A549 (cell line): ENCODE measurements at regions of chr5 and their contacts with region 1.

Region 1: GRCh38 chr5:81165493-81166119 is 67.5 kb upstream of the CKMT2 start:
- DNase-seq: peak; percentile 69 to 71
- ATAC-seq: peak; percentile 90 to 98
- H3K4me3 ChIP-seq: no peak overlapping the region
- H3K27ac ChIP-seq: no peak overlapping the region
- H3K4me1 ChIP-seq: no peaks in the 10 kb centered on the region
- CTCF ChIP-seq: peak; percentile 74
- EP300 ChIP-seq: no peak
- POLR2A ChIP-seq: no peak
- RAD21 ChIP-seq: peak; percentile 80 to 83

Region 2: GRCh38 chr5:80686757-80687156 is 478.8 kb before region 1 on chr5:
- CTCF ChIA-PET with region 1: interaction called, 11 read pairs
- POLR2A ChIA-PET with region 1: no interaction called
- DNase-seq: peak in 1 of 2 experiments; percentile 9
- ATAC-seq: no peak
- H3K4me3 ChIP-seq: no peak overlapping the region
- H3K27ac ChIP-seq: no peak overlapping the region
- H3K4me1 ChIP-seq: no peaks in the 10 kb centered on the region
- CTCF ChIP-seq: peak; percentile 44
- EP300 ChIP-seq: no peak
- POLR2A ChIP-seq: no peak
- RAD21 ChIP-seq: peak; percentile 43 to 69

Region 3: DNA sequence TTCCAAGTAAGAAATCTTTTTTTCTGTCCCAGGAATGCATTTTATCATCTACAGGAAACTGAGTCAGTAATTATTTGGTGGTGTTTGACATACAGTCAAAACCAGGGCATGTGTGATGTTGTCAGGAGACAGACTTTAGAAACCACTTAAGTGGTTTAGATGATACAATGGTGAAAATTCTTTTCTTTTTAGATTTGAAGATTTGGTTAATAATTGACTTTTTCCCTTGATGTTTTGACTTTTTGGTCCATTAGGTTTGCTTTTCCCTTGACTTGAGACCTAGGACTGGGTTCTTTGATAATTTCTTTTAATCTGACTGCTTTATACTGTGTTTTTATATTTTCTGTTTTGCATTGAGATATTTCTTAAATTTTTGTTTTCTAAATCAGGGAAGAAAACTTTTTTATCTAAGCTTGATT is 120.2 kb before region 1 on chr5:
- CTCF ChIA-PET with region 1: no interaction called
- POLR2A ChIA-PET with region 1: no interaction called
- DNase-seq: no peak
- ATAC-seq: no peak
- H3K4me3 ChIP-seq: no peak overlapping the region
- H3K27ac ChIP-seq: no peak overlapping the region
- H3K4me1 ChIP-seq: no peaks in the 10 kb centered on the region
- CTCF ChIP-seq: no peak
- EP300 ChIP-seq: no peak
- POLR2A ChIP-seq: no peak
- RAD21 ChIP-seq: no peak

Region 4: DNA sequence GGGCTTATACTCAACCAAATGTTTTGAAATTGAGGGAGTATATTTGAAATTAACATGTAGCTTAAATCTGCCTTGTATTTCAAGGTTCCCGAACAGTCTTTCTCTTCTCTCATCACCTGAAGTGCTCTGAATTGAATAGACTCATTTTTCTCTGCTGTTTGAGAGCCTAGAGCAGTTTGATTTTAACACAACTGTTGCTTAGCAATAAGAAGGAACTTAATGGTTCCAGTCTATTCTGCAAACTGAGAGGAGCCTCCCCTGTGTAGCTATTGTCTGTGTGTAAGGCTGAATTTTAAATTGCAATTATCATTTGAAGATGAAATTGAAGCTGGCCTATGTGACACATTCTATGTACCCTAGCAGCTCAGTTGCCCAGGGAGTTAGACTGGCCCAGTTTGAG is 19.6 kb before region 1 on chr5:
- CTCF ChIA-PET with region 1: interaction called, 12 read pairs
- POLR2A ChIA-PET with region 1: no interaction called
- DNase-seq: no peak
- ATAC-seq: no peak
- H3K4me3 ChIP-seq: no peak overlapping the region
- H3K27ac ChIP-seq: no peak overlapping the region
- H3K4me1 ChIP-seq: no peaks in the 10 kb centered on the region
- CTCF ChIP-seq: no peak
- EP300 ChIP-seq: no peak
- POLR2A ChIP-seq: no peak
- RAD21 ChIP-seq: no peak

Region 5: DNA sequence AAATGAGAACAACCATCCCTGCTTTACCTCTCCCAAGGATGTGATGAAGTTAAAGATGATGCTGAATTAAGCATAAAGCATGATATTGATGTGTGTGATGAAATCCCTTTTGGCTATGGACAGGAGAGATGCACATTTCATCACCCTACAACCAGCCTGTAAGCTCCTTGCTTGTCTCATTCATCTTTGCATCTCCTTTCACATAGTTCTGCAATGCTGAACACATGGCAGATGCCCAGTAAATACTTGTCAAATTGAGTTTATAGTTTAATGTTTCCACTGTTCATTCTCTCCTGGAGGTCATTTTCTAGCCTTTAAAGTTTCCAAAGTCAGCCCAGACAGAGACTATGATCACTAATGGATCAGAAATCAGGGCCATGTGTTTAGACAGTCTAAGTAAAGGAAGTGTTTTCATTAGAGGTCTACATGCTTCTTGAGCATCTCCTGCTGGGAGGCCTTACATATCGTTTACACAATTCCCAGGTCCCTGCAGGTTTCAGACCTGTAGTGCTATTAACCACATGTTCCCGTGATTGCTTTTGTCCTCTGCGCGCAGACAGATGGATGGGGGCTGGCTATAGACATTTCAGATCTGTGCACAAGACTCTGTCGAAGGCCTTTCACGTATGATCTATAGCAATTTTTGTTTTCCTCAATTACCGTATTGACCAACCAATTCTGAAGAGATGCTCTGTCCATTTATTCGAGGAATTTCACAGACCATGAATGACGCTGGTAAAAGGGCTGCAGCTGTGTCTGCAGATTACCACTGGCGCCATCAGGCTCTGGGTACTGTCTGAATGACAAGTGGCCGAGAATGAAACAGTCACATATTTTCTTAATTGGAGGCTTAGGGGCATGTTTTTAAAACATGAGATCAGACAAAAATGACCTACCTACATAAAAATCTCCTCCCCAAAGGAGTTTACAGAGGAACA is 18.5 kb after region 1 on chr5:
- CTCF ChIA-PET with region 1: interaction called, 11 read pairs
- POLR2A ChIA-PET with region 1: no interaction called
- DNase-seq: no peak
- ATAC-seq: no peak
- H3K4me3 ChIP-seq: no peak overlapping the region
- H3K27ac ChIP-seq: no peak overlapping the region
- H3K4me1 ChIP-seq: no peaks in the 10 kb centered on the region
- CTCF ChIP-seq: no peak
- EP300 ChIP-seq: no peak
- POLR2A ChIP-seq: no peak
- RAD21 ChIP-seq: no peak

Region 6: GRCh38 chr5:81301271-81302015 is 135.8 kb after region 1 on chr5 and contains the start of gene ZCCHC9:
- CTCF ChIA-PET with region 1: interaction called, 12 read pairs
- POLR2A ChIA-PET with region 1: no interaction called
- DNase-seq: peak; percentile 73 to 95
- ATAC-seq: peak; percentile 97 to 99
- H3K4me3 ChIP-seq: peak within 1 kb of the TSS; percentile 73
- H3K27ac ChIP-seq: peak within 1 kb of the TSS; percentile 86 to 99
- H3K4me1 ChIP-seq: peaks cover 23% of the 10 kb centered on the region
- CTCF ChIP-seq: no peak
- EP300 ChIP-seq: no peak
- POLR2A ChIP-seq: peak; percentile 94
- RAD21 ChIP-seq: no peak
- polyA plus RNA-seq, gene ZCCHC9: 27.3 and 44.4 TPM in 2 replicates